ENCODE measurements at regions of chr19 and their contacts with region 1.

Region 1: GRCh38 chr19:8505680-8506401 is 3.4 kb upstream of the PRAM1 start:
- DNase-seq: peak; percentile 86
- H3K4me3 Mint-ChIP-seq: peak overlapping the region; percentile 91
- H3K27ac Mint-ChIP-seq: no peak overlapping the region
- H3K4me1 Mint-ChIP-seq: no peaks in the 10 kb centered on the region
- H3K27me3 Mint-ChIP-seq: no peaks in the 10 kb centered on the region
- CTCF ChIP-seq: peak; percentile 82

Region 2: DNA sequence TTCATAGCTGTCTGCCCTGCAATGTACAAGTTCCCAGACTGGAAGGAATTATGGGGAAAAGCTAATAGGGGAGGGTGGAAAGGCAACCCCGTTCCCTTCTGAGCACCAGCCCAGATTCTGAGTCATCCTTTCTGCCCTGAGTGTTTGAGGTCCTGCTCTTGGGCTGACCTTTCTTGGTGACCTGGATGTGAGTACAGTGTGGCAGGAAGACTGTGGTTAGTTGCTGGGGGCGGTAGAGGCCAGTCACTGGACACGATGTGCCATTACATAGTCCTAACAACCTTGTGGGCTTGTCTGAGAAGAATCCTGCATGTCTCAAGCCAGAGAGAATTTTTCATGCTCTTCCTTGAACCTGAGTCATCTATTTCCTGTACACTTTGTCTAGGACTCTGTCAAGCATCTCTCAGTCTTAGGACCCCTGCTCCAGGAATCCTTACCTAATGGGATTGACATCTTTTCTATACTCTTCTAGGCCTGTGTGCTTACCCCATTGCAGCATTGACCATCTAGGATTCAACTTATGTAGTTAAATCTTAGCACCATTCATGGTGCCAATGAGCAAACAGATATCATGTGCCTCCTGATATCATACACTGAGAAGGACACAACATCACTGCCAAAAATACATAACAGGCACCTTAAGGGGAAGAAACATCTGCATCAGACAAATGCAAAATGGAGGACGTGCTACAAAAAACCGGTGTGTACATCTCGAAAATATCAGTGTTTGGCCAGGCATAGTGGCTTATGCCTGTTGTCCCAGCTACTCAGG is 150.0 kb before region 1 on chr19:
- CTCF ChIA-PET with region 1: interaction called, 10 read pairs
- intact Hi-C with region 1: loop called (anchors 2 kb)
- DNase-seq: peak; percentile 34
- H3K4me3 Mint-ChIP-seq: no peak overlapping the region
- H3K27ac Mint-ChIP-seq: no peak overlapping the region
- H3K4me1 Mint-ChIP-seq: no peaks in the 10 kb centered on the region
- H3K27me3 Mint-ChIP-seq: peaks cover 19% of the 10 kb centered on the region
- CTCF ChIP-seq: no peak

Region 3: GRCh38 chr19:8481201-8481600 is 24.6 kb before region 1 on chr19:
- CTCF ChIA-PET with region 1: interaction called, 3 read pairs
- intact Hi-C with region 1: loop called (anchors 2 kb)
- DNase-seq: no peak
- H3K4me3 Mint-ChIP-seq: no peak overlapping the region
- H3K27ac Mint-ChIP-seq: no peak overlapping the region
- H3K4me1 Mint-ChIP-seq: peaks cover 21% of the 10 kb centered on the region
- H3K27me3 Mint-ChIP-seq: no peaks in the 10 kb centered on the region
- CTCF ChIP-seq: no peak

Measured in Calu3 (cell line).